Activated CD4-positive, alpha-beta memory T cell treated with anti-CD3 and anti-CD28 coated beads for 36 hours (primary cell): ENCODE measurements at regions of chr12 and their contacts with region 1.

Region 1: GRCh38 chr12:80178846-80179245 is 79.5 kb downstream of the OTOGL start:
- DNase-seq: peak; percentile 42
- H3K4me3 Mint-ChIP-seq: no peak overlapping the region
- H3K27ac Mint-ChIP-seq: no peak overlapping the region
- H3K4me1 Mint-ChIP-seq: peaks cover 4% of the 10 kb centered on the region
- H3K27me3 Mint-ChIP-seq: no peaks in the 10 kb centered on the region

Region 2: DNA sequence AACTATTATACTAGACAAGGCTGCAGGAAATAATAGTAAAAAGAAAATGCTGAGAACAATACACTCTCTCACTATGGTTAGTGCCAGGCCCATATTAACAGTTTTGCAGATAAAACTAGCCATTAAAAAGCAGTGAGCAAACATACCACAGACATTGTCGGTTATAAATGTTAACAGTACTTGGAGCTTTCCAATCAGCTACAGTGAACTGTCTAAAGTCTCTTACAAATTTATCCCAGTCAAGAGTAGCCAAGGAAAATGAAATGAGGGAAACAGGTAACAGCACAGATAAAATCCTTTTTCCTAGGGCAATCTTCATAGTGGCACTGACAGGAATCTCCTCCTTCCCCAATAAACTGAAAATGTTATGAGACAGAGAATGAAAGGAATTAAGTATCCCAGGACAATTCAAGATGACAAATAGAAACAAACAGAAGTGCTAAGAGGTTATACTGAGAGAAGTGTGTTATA is 518.9 kb before region 1 on chr12:
- CTCF ChIA-PET with region 1: no interaction called
- POLR2A ChIA-PET with region 1: no interaction called
- intact Hi-C with region 1: no loop called
- DNase-seq: no peak
- H3K4me3 Mint-ChIP-seq: no peak overlapping the region
- H3K27ac Mint-ChIP-seq: no peak overlapping the region
- H3K4me1 Mint-ChIP-seq: no peaks in the 10 kb centered on the region
- H3K27me3 Mint-ChIP-seq: no peaks in the 10 kb centered on the region

Region 3: DNA sequence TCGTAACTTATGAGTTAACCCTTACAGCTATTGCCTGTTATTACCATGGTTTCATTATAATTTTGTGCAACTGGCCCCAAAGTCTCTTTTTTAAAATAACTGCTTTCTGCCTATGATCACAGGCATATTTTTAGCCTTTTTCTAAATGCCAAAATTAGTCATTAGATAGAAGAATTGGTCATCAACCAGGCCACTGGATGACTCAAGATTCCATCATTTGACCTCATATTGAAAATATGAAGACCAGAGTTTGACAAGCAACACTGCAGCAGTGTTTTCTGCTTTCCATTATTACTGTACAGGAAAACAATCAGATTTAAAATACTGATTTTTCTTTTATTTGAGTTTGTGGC is 134.2 kb before region 1 on chr12:
- CTCF ChIA-PET with region 1: no interaction called
- POLR2A ChIA-PET with region 1: no interaction called
- intact Hi-C with region 1: loop called (anchors 5 kb)
- DNase-seq: no peak
- H3K4me3 Mint-ChIP-seq: no peak overlapping the region
- H3K27ac Mint-ChIP-seq: no peak overlapping the region
- H3K4me1 Mint-ChIP-seq: peaks cover 4% of the 10 kb centered on the region
- H3K27me3 Mint-ChIP-seq: no peaks in the 10 kb centered on the region

Region 4: GRCh38 chr12:80142640-80143039 is 36.2 kb before region 1 on chr12:
- CTCF ChIA-PET with region 1: no interaction called
- POLR2A ChIA-PET with region 1: no interaction called
- intact Hi-C with region 1: no loop called
- DNase-seq: peak; percentile 9
- H3K4me3 Mint-ChIP-seq: no peak overlapping the region
- H3K27ac Mint-ChIP-seq: no peak overlapping the region
- H3K4me1 Mint-ChIP-seq: peaks cover 4% of the 10 kb centered on the region
- H3K27me3 Mint-ChIP-seq: no peaks in the 10 kb centered on the region